ENCODE measurements at regions of chr2 and their contacts with region 1.

Region 1: DNA sequence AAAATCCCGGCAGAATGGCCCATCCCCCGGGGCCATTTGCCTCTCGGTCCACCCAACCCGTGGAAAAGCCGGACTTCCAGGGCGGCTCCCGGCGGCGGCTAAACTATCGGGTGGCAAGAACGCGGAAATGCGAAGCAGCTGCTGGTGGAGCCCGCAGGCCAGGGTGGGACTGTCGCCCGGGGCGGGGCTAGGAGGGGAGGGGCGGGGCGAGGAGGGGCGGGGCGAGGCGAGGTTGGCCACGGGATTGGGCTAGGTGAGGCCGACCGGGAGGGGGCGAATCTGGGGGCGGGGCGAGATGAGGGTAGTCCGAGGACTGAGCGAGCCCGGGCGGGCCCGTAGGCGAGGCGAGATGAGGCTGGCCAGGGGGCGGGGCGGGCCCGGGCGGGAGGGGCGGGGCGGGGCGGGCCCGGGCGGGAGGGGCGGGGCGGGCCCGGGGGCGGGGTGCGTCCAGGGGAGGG is 315 bp upstream of the SLC66A3 start:
- DNase-seq: peak; percentile 89
- H3K4me3 ChIP-seq: peak overlapping the region; percentile 56
- H3K27ac ChIP-seq: peak overlapping the region; percentile 92
- H3K27me3 ChIP-seq: no peaks in the 10 kb centered on the region
- CTCF ChIP-seq: no peak

Region 2: GRCh38 chr2:11166476-11166875 is 11.5 kb after region 1 on chr2:
- CTCF ChIA-PET with region 1: no interaction called
- POLR2A ChIA-PET with region 1: no interaction called
- DNase-seq: no peak
- H3K4me3 ChIP-seq: no peak overlapping the region
- H3K27ac ChIP-seq: no peak overlapping the region
- H3K27me3 ChIP-seq: no peaks in the 10 kb centered on the region
- CTCF ChIP-seq: no peak

Region 3: DNA sequence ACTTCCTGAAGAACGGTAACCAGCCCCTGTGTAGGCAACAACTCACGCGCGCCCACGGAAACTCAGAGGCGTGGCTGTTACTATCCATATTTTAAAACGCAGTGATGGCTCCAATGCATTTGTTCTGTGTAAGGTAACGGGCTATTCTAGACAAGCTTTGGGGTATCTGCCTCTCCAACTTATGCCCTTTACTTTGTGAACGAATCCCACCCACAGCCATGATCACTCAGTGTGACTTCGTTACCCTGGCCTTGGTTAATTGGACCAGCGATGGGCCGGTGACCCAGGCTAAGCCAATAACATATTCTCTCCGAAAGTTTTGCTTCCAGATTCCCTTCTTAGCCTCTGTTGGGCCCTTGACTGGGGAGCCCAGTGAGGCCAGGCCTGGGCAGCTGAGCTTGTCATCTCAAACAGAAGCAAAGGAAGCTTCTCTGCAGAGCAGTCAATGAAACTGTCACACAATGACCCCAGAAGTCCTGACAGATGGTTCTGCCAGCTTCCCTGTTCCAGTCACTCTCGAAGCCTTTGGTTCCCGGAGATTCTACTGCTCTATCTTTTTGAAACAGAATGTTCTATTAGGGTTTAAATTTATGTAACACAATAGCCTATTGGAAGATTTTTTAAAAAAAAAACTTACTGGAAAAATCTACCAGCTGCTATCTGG is 220.2 kb after region 1 on chr2:
- CTCF ChIA-PET with region 1: no interaction called
- POLR2A ChIA-PET with region 1: interaction called, 11 read pairs
- DNase-seq: no peak
- H3K4me3 ChIP-seq: peak overlapping the region; percentile 53; the same call in 1 of the 2 replicates
- H3K27ac ChIP-seq: peak overlapping the region; percentile 99
- H3K27me3 ChIP-seq: no peaks in the 10 kb centered on the region
- CTCF ChIP-seq: no peak